Transverse colon (tissue), 4 donors: ENCODE measurements at regions of chr15 and their contacts with region 1.

Region 1: GRCh38 chr15:96356494-96357455 is 26.3 kb downstream of the NR2F2 start:
- DNase-seq: peak; percentile 83
- H3K4me3 ChIP-seq: peak overlapping the region; percentile 10 to 78 (median 50)
- H3K27ac ChIP-seq: peak overlapping the region; percentile 68 to 74 (median 72)
- H3K4me1 ChIP-seq: peaks cover 0 to 45% (median 21%) of the 10 kb centered on the region in 4 donors
- H3K27me3 ChIP-seq: peaks cover 87% of the 10 kb centered on the region
- CTCF ChIP-seq: peak; percentile 94 to 99 (median 97)
- EP300 ChIP-seq: no peak
- POLR2A ChIP-seq: no peak

Region 2: DNA sequence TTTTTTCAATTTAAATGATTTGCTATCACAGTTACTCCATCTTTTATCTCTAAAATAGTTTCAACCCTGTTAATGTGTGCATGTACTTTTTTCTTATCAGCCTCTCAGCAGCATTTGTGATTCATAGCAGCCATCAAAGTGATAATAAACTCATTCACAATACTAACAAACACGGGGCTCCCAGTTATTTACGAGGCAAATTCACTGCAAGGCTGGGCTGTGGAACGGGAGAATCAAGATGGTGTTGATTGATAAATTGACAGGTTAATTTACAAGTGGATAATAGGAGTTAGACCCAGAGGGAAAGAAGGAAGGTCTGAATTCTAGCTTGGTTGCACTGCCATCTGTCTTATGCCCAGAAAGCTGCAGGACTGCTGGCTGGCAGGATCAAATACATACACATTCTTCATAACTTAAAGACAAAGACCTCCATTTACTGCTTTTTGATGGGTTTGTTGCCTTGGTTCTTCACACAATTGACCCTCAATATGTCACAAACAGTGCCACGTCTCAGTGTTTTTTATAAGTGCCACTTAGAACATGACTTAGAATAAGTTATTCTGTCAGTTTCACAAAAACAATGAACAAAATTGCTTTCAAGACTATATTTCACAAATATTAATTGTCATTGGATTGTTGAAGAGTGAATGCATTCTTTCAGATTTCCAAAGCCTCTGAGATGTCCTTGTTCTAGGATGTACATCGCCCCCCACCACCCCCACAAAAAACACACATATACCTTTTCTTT is 536.6 kb after region 1 on chr15:
- in situ Hi-C with region 1: loop called in 1 of 4 experiments (anchors 25 kb)
- intact Hi-C with region 1: no loop called
- DNase-seq: no peak
- H3K4me3 ChIP-seq: no peak overlapping the region
- H3K27ac ChIP-seq: no peak overlapping the region
- H3K4me1 ChIP-seq: peaks cover 0 to 12% (median 1%) of the 10 kb centered on the region in 4 donors
- H3K27me3 ChIP-seq: no peaks in the 10 kb centered on the region
- CTCF ChIP-seq: peak in 4 of 5 experiments; percentile 12 to 46 (median 36)
- EP300 ChIP-seq: no peak
- POLR2A ChIP-seq: no peak

Region 3: GRCh38 chr15:97234851-97235610 is 878.3 kb after region 1 on chr15:
- in situ Hi-C with region 1: loop called in 2 of 4 experiments (anchors 25 kb)
- intact Hi-C with region 1: no loop called
- DNase-seq: peak; percentile 46
- H3K4me3 ChIP-seq: no peak overlapping the region
- H3K27ac ChIP-seq: no peak overlapping the region
- H3K4me1 ChIP-seq: peaks cover 0 to 6% (median 0%) of the 10 kb centered on the region in 4 donors
- H3K27me3 ChIP-seq: no peaks in the 10 kb centered on the region
- CTCF ChIP-seq: peak; percentile 75 to 85 (median 79)
- EP300 ChIP-seq: no peak
- POLR2A ChIP-seq: no peak

Region 4: DNA sequence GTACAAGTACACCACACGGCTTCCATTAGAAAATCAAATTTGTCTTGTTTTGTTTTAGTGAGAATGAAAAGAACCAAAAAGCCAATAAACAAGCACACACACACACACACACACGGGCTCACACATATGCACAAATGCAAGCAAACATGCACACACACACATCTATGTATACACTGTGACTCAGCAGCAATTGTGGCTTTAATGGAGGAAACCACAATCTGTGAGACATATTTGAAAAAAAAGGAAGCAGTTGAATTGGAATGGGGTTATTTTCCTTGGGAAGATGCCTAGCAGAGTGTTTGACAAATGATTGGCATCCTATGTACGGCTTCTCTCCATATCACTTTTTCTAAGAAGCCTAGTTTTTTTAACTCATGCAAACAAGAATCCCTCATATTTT is 1402.6 kb after region 1 on chr15:
- in situ Hi-C with region 1: loop called in 1 of 4 experiments (anchors 25 kb)
- intact Hi-C with region 1: no loop called
- DNase-seq: no peak
- H3K4me3 ChIP-seq: no peak overlapping the region
- H3K27ac ChIP-seq: no peak overlapping the region
- H3K4me1 ChIP-seq: peaks cover 0 to 5% (median 0%) of the 10 kb centered on the region in 4 donors
- H3K27me3 ChIP-seq: no peaks in the 10 kb centered on the region
- CTCF ChIP-seq: no peak
- EP300 ChIP-seq: no peak
- POLR2A ChIP-seq: no peak

Region 5: DNA sequence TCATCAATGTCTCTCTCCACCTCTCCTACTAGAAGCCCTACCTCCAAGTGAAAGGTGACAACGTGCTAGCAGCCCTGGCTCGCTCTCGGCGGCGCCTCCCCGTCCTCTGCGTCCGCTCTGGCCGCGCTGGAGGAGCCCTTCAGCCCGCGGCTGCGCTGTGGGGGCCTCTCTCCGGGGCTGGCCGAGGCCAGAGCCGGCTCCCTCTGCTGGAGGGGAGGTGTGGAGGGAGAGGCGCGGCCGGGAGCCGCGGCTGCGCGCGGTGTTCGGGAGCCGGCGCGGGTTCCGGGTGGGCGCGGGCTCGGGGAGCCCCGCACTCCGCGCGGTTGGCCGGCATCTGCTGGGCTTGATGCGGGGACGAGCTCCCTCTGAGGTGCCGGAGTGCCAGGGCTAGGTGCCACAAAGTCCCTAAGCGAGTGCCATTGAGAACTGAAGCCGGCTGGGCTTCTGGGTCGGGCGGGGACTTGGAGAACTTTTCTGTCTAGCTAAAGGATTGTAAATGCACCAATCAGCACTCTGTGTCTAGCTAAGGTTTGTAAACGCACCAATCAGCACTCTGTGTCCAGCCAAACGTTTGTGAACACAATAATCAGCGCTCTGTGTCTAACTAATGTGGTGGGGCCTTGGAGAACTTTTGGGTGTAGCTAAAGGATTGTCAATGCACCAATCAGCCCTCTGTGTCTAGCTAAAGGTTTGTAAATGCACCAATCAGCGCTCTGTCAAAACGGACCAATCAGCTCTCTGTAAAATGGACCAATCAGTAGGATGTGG is 1518.9 kb after region 1 on chr15:
- in situ Hi-C with region 1: no loop called
- intact Hi-C with region 1: loop called (anchors 5 kb)
- DNase-seq: peak; percentile 28
- H3K4me3 ChIP-seq: peak overlapping the region in 3 of 4 donors; percentile 18 to 31 (median 21)
- H3K27ac ChIP-seq: peak overlapping the region in 1 of 4 donors; percentile 47
- H3K4me1 ChIP-seq: peaks cover 0 to 5% (median 2%) of the 10 kb centered on the region in 4 donors
- H3K27me3 ChIP-seq: no peaks in the 10 kb centered on the region
- CTCF ChIP-seq: peak in 1 of 5 experiments; percentile 17
- EP300 ChIP-seq: no peak
- POLR2A ChIP-seq: no peak

Region 6: GRCh38 chr15:98063315-98063714 is 1706.5 kb after region 1 on chr15:
- in situ Hi-C with region 1: no loop called
- intact Hi-C with region 1: no loop called
- DNase-seq: no peak
- H3K4me3 ChIP-seq: no peak overlapping the region
- H3K27ac ChIP-seq: no peak overlapping the region
- H3K4me1 ChIP-seq: no peaks in the 10 kb centered on the region
- H3K27me3 ChIP-seq: no peaks in the 10 kb centered on the region
- CTCF ChIP-seq: no peak
- EP300 ChIP-seq: no peak
- POLR2A ChIP-seq: no peak